Activated CD4-positive, alpha-beta T cell treated with anti-CD3 and anti-CD28 coated beads for 36 hours (primary cell): ENCODE measurements at regions of chr1 and their contacts with region 1.

Region 1: GRCh38 chr1:61782771-61783170 is 40.5 kb downstream of the PATJ start:
- DNase-seq: peak; percentile 79
- ATAC-seq: peak; percentile 94
- H3K4me3 Mint-ChIP-seq: peak overlapping the region; percentile 2
- H3K27ac Mint-ChIP-seq: peak overlapping the region; percentile 65
- H3K4me1 Mint-ChIP-seq: peaks cover 49% of the 10 kb centered on the region
- H3K27me3 Mint-ChIP-seq: no peaks in the 10 kb centered on the region

Region 2: DNA sequence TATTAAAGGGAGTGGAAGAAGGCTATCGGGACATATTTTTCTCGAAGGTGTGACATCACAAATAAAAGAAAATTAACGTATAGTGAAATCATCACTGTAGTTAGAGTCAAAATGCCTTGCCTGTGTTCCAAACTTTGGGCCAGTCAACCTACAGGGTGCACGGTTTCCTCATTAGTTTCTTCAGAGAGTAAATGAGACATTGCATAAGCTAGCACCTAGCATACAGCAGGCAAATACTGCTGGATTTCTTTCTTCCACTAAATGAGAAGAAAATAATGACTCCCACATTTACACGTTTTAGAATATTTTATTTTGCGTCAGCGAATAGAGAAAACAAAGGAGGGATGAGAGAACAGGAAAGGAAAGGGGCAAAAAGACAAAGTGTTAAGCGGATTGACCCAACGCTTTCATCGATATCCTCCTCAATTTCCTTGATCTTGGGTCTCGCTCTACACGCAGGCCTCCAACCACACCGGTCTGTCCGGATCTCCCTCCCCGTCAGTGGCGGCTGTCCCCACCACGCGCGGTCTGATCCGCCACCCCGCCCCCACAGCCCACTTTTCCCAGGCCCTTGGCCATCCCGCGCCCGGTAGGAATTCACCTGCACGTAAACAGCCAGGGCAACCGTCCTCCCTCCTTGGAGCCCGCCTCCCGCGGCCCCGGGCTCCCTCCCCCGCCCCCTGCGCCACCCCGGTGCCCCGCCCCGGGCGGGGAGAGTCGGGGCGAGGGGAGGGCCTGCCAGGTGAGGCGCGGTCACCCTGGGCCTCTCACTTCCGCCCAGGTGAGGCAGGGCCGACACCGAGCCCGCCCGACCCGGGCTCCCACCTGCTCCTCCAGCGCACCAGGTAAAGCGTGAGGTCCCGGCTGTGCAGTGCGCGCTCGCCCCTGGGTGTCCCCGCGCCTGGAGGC is 40.8 kb before region 1 on chr1 and contains the start of gene PATJ:
- CTCF ChIA-PET with region 1: no interaction called
- POLR2A ChIA-PET with region 1: no interaction called
- intact Hi-C with region 1: loop called (anchors 2 kb)
- DNase-seq: peak; percentile 77
- ATAC-seq: peak; percentile 85
- H3K4me3 Mint-ChIP-seq: peak within 1 kb of the TSS; percentile 86
- H3K27ac Mint-ChIP-seq: peak within 1 kb of the TSS; percentile 92
- H3K4me1 Mint-ChIP-seq: peaks cover 24% of the 10 kb centered on the region
- H3K27me3 Mint-ChIP-seq: no peaks in the 10 kb centered on the region
- total RNA-seq, gene PATJ: 12.6 to 12.8 TPM